ENCODE measurements at regions of chr22 and their contacts with region 1.

Region 1: GRCh38 chr22:41517172-41518047 is 26.9 kb downstream of the POLR3H start:
- DNase-seq: no peak
- ATAC-seq: peak; percentile 26

Region 2: GRCh38 chr22:41403532-41404318 is 113.7 kb before region 1 on chr22:
- intact Hi-C with region 1: loop called (anchors 2 kb)
- DNase-seq: peak; percentile 93
- ATAC-seq: peak; percentile 91

Region 3: DNA sequence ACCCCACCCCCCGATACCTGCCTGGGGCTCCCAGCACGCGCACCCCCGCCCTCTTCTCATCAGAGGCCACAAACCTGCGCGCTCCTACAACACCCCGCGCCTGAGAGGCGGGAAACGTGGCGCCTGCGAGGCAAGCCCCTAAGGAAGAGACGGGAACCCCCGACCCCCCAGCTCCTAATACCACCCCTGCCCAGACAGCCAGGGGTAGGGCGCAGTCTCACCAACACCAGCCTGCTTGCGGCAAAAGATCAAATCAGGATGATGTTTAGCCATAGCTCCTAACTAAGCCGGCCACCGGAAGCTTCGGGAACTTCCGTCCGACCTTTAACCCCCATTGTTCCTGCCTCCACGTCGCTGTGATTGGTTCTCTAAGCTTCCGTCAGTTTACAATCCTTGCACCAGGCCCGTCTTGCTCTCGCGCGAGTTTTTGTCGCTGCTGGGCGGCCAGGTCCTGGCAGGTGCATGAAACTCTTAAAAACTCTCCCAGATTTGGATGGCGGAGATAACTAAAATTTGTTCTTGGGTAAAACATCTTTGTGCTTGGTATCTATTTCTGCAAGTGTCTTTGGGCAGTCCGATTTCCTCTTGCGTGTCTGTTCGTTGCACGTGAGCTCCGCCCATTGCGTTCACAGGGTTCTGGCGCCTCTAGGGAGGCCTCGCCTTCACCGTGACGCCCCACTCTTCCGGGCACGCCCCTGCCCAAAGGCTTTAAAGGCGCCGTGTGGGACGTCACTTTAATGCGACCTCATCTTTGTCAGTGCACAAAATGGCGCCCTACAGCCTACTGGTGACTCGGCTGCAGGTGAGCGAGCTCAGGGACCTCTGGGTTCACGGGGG is 48.8 kb before region 1 on chr22 and contains the starts of genes ACO2 and PHF5A:
- intact Hi-C with region 1: loop called (anchors 2 kb)
- DNase-seq: peak; percentile 98
- ATAC-seq: peak; percentile 96
- total RNA-seq, gene ACO2: 810 TPM
- total RNA-seq, gene PHF5A: 25.5 TPM

Measured in Right ventricle myocardium inferior (tissue), 1 donor.